ENCODE measurements at regions of chr5 and their contacts with region 1.

Region 1: GRCh38 chr5:179530069-179530998 is 20.0 kb upstream of the RUFY1 start:
- DNase-seq: peak; percentile 77
- ATAC-seq: peak; percentile 86
- H3K4me3 ChIP-seq: peak overlapping the region in 4 of 5 experiments; percentile 56 to 64 (median 64)
- H3K4me3 Mint-ChIP-seq: peak overlapping the region; percentile 78
- H3K27ac ChIP-seq: peak overlapping the region in 1 of 2 donors; percentile 47
- H3K27ac Mint-ChIP-seq: peak overlapping the region; percentile 56
- H3K4me1 ChIP-seq: peaks cover 23 to 31% of the 10 kb centered on the region in 2 donors
- H3K4me1 Mint-ChIP-seq: peaks cover 38% of the 10 kb centered on the region
- H3K27me3 ChIP-seq: no peaks in the 10 kb centered on the region
- H3K27me3 Mint-ChIP-seq: no peaks in the 10 kb centered on the region
- CTCF ChIP-seq: peak; percentile 38

Region 2: DNA sequence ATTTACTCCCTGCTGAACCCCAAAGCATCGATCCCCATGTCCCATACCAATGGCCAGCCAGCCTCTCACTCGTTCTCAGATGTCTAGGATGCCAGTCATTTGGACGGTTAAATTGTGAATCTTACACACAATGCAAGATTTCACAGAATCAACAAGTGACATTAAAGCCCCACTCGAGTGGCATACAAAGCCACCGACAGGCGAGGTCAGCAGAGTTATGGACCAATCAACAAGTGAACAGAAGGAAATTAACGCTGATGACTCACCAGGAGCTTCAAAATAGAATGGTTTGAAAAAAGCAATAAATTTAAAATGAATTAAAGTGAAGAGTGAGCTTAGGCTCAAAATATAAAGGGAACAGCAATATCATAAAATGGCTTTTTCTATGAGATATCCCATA is 11.8 kb after region 1 on chr5:
- CTCF ChIA-PET with region 1: interaction called, 8 read pairs
- POLR2A ChIA-PET with region 1: interaction called, 8 read pairs
- intact Hi-C with region 1: loop called (anchors 1 kb)
- DNase-seq: no peak
- ATAC-seq: no peak
- H3K4me3 ChIP-seq: no peak overlapping the region
- H3K4me3 Mint-ChIP-seq: no peak overlapping the region
- H3K27ac ChIP-seq: no peak overlapping the region
- H3K27ac Mint-ChIP-seq: peak overlapping the region; percentile 21
- H3K4me1 ChIP-seq: peaks cover 21 to 31% of the 10 kb centered on the region in 2 donors
- H3K4me1 Mint-ChIP-seq: peaks cover 31% of the 10 kb centered on the region
- H3K27me3 ChIP-seq: no peaks in the 10 kb centered on the region
- H3K27me3 Mint-ChIP-seq: no peaks in the 10 kb centered on the region
- CTCF ChIP-seq: no peak

Region 3: GRCh38 chr5:179550511-179551230 is 20.3 kb after region 1 on chr5 and contains the start of gene RUFY1:
- CTCF ChIA-PET with region 1: interaction called, 3 read pairs
- POLR2A ChIA-PET with region 1: interaction called, 9 read pairs
- intact Hi-C with region 1: loop called (anchors 1 kb)
- DNase-seq: peak; percentile 92
- ATAC-seq: peak; percentile 74
- H3K4me3 ChIP-seq: peak within 1 kb of the TSS; percentile 60 to 92 (median 76)
- H3K4me3 Mint-ChIP-seq: peak within 1 kb of the TSS; percentile 99
- H3K27ac ChIP-seq: peak within 1 kb of the TSS; percentile 90 to 92
- H3K27ac Mint-ChIP-seq: peak within 1 kb of the TSS; percentile 100
- H3K4me1 ChIP-seq: peaks cover 25 to 31% of the 10 kb centered on the region in 2 donors
- H3K4me1 Mint-ChIP-seq: peaks cover 50% of the 10 kb centered on the region
- H3K27me3 ChIP-seq: no peaks in the 10 kb centered on the region
- H3K27me3 Mint-ChIP-seq: no peaks in the 10 kb centered on the region
- CTCF ChIP-seq: no peak
- total RNA-seq, gene RUFY1: 99.8 and 109 TPM in 2 replicates

Region 4: GRCh38 chr5:179559284-179560252 is 29.2 kb after region 1 on chr5:
- CTCF ChIA-PET with region 1: interaction called, 13 read pairs
- POLR2A ChIA-PET with region 1: interaction called, 3 read pairs
- intact Hi-C with region 1: no loop called
- DNase-seq: peak; percentile 89
- ATAC-seq: peak; percentile 99
- H3K4me3 ChIP-seq: peak overlapping the region; percentile 56 to 86 (median 70)
- H3K4me3 Mint-ChIP-seq: peak overlapping the region; percentile 87
- H3K27ac ChIP-seq: peak overlapping the region; percentile 67 to 85
- H3K27ac Mint-ChIP-seq: peak overlapping the region; percentile 83
- H3K4me1 ChIP-seq: peaks cover 3 to 15% of the 10 kb centered on the region in 2 donors
- H3K4me1 Mint-ChIP-seq: peaks cover 21% of the 10 kb centered on the region
- H3K27me3 ChIP-seq: no peaks in the 10 kb centered on the region
- H3K27me3 Mint-ChIP-seq: no peaks in the 10 kb centered on the region
- CTCF ChIP-seq: no peak

Region 5: DNA sequence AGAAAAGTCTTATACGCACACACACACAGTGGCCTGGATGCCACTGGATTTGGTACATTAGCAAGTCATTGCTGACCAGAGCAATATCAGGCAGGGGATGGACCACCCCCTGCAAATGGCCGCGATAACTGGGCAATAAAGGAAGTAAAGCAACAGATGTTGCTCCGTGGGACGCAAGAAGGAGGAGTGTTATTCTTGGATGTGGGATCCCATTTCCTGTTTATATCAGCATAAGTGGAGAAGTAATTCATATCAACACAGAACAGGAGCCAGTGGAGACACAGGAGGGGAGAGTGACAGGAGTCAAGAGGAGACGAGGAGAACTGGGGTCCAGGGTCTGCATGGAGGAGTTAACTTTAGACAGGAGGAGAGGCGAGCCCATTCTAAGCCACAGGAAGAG is 38.4 kb after region 1 on chr5:
- CTCF ChIA-PET with region 1: interaction called, 4 read pairs
- POLR2A ChIA-PET with region 1: no interaction called
- intact Hi-C with region 1: loop called (anchors 5 kb)
- DNase-seq: no peak
- ATAC-seq: no peak
- H3K4me3 ChIP-seq: no peak overlapping the region
- H3K4me3 Mint-ChIP-seq: no peak overlapping the region
- H3K27ac ChIP-seq: peak overlapping the region in 1 of 2 donors; percentile 65
- H3K27ac Mint-ChIP-seq: peak overlapping the region; percentile 43
- H3K4me1 ChIP-seq: no peaks in the 10 kb centered on the region
- H3K4me1 Mint-ChIP-seq: no peaks in the 10 kb centered on the region
- H3K27me3 ChIP-seq: no peaks in the 10 kb centered on the region
- H3K27me3 Mint-ChIP-seq: no peaks in the 10 kb centered on the region
- CTCF ChIP-seq: no peak

Measured in B cell (primary cell).